Activated naive CD4-positive, alpha-beta T cell treated with anti-CD3 and anti-CD28 coated beads for 36 hours (primary cell): ENCODE measurements at regions of chr19 and their contacts with region 1.

Region 1: DNA sequence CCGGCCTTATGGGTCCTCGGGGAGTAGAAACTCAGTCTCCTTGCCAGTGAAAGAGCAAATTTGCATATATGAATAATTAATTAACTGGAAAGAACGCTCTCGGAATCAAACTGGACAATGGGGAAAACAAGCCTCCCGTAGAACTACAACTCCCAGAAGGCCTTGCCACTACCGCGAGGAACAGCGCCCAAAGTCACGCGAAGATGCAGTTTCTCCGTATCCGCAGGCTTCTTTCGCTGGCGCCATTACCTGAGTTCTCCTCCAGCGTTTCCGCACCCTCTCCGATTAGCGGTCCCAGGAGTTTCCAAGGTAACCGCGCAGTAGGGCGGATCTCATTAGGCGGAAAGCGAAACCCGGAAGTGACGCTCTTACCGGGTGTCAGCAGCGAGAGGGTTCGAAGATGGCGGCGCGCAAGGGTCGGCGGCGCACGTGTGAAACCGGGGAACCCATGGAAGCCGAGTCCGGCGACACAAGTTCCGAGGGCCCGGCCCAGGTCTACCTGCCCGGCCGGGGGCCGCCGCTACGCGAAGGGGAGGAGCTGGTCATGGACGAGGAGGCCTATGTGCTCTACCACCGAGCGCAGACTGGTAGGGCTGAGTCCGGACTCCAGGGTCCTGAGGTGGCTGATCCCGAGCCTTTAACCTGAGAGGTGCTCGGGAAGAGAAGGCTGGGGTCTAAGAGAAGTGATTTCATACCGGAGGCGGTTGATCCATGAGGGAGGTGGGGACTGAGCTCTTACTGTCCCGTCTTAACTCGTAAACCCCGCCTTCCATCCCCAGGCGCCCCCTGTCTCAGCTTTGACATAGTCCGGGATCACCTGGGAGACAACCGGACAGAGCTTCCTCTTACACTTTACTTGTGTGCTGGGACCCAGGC is at the start of gene GRWD1:
- DNase-seq: peak; percentile 97
- H3K4me3 Mint-ChIP-seq: peak within 1 kb of the TSS; percentile 90
- H3K27ac Mint-ChIP-seq: peak within 1 kb of the TSS; percentile 84
- H3K4me1 Mint-ChIP-seq: peaks cover 35% of the 10 kb centered on the region
- H3K27me3 Mint-ChIP-seq: peaks cover 18% of the 10 kb centered on the region
- total RNA-seq, gene GRWD1: 32.4 to 36.0 TPM

Region 2: DNA sequence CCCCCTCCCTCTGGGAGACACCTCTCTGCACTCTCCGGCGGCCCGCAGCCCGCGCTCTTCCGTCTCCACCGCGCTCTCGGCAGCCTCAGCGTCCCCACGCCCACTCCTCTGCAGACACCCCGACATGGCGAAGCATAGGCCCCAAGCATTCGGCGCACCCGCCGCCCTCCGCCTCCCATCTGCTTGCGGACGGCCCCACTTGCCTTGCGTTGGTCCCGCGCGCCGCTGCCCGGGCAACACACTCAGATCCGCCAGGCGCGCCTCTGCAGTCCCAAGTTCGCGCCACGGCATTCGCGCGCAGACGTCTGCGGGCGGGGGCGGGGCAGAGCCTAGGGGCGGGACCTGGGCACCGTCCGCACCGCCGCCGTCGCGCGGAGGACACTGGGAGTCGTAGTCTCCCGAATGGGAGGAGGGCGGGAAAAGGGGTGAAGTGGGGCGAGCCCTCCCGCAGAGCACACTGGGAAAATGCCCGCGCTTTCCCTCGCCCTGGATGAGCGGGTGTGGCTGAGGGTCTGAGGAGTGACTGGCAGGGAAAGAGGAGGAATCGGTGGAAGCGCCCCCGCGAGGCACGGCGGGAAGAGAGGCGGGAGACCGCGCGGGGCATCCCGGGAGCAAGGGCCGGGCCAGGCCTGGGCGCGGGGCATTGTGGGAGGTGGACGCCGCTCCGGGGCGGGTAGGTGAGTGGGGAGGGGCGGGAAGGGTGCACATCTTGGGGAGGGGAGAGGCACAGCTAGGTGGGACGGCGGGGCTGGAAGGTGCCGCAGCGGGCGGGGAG is 275.6 kb before region 1 on chr19 and contains the starts of genes LIG1 and ZSWIM9:
- CTCF ChIA-PET with region 1: no interaction called
- intact Hi-C with region 1: loop called (anchors 1 kb)
- DNase-seq: peak; percentile 93
- H3K4me3 Mint-ChIP-seq: peak within 1 kb of the TSS; percentile 90
- H3K27ac Mint-ChIP-seq: peak within 1 kb of the TSS; percentile 97
- H3K4me1 Mint-ChIP-seq: peaks cover 30% of the 10 kb centered on the region
- H3K27me3 Mint-ChIP-seq: no peaks in the 10 kb centered on the region
- total RNA-seq, gene LIG1: 187 to 195 TPM
- total RNA-seq, gene ZSWIM9: 6.1 to 6.7 TPM

Region 3: DNA sequence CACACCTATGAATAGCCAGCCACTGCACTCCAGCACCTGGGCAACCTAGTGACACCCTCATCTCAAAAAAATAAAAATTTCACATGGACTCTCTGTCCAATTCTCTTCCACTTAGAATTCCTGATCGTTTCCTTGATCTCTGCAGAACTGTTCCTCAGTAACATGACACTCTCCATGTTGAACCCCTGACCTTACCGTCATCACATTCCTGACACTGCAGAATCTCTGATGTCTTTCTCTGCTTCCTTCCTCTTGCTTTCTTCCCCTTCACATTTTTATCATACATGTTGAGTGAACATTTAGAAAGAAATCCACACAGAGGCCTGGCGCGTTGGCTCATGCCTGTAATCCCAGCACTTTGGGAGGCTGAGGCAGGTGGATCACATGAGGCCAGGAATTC is 160.9 kb before region 1 on chr19:
- CTCF ChIA-PET with region 1: no interaction called
- intact Hi-C with region 1: no loop called
- DNase-seq: no peak
- H3K4me3 Mint-ChIP-seq: no peak overlapping the region
- H3K27ac Mint-ChIP-seq: no peak overlapping the region
- H3K4me1 Mint-ChIP-seq: no peaks in the 10 kb centered on the region
- H3K27me3 Mint-ChIP-seq: no peaks in the 10 kb centered on the region

Region 4: GRCh38 chr19:48391107-48391986 is 54.5 kb before region 1 on chr19 and contains the start of gene KDELR1:
- CTCF ChIA-PET with region 1: interaction called, 7 read pairs
- intact Hi-C with region 1: loop called (anchors 1 kb)
- DNase-seq: peak; percentile 73
- H3K4me3 Mint-ChIP-seq: peak within 1 kb of the TSS; percentile 94
- H3K27ac Mint-ChIP-seq: peak within 1 kb of the TSS; percentile 90
- H3K4me1 Mint-ChIP-seq: peaks cover 36% of the 10 kb centered on the region
- H3K27me3 Mint-ChIP-seq: peaks cover 27% of the 10 kb centered on the region
- total RNA-seq, gene KDELR1: 81.5 to 83.8 TPM

Region 5: GRCh38 chr19:48476176-48476575 is 30.3 kb after region 1 on chr19:
- CTCF ChIA-PET with region 1: no interaction called
- intact Hi-C with region 1: no loop called
- DNase-seq: no peak
- H3K4me3 Mint-ChIP-seq: no peak overlapping the region
- H3K27ac Mint-ChIP-seq: no peak overlapping the region
- H3K4me1 Mint-ChIP-seq: peaks cover 9% of the 10 kb centered on the region
- H3K27me3 Mint-ChIP-seq: no peaks in the 10 kb centered on the region

Region 6: GRCh38 chr19:48513289-48514122 is 67.7 kb after region 1 on chr19:
- CTCF ChIA-PET with region 1: no interaction called
- intact Hi-C with region 1: loop called (anchors 1 kb)
- DNase-seq: peak; percentile 83
- H3K4me3 Mint-ChIP-seq: no peak overlapping the region
- H3K27ac Mint-ChIP-seq: peak overlapping the region; percentile 31
- H3K4me1 Mint-ChIP-seq: peaks cover 16% of the 10 kb centered on the region
- H3K27me3 Mint-ChIP-seq: no peaks in the 10 kb centered on the region

Region 7: GRCh38 chr19:48618916-48619691 is 173.3 kb after region 1 on chr19 and contains the starts of genes RPL18 and SPHK2:
- CTCF ChIA-PET with region 1: no interaction called
- intact Hi-C with region 1: loop called (anchors 2 kb)
- DNase-seq: peak; percentile 95
- H3K4me3 Mint-ChIP-seq: peak within 1 kb of the TSS; percentile 99
- H3K27ac Mint-ChIP-seq: peak within 1 kb of the TSS; percentile 99
- H3K4me1 Mint-ChIP-seq: peaks cover 53% of the 10 kb centered on the region
- H3K27me3 Mint-ChIP-seq: no peaks in the 10 kb centered on the region
- total RNA-seq, gene RPL18: 2,373 to 2,473 TPM
- total RNA-seq, gene SPHK2: 20.1 to 20.6 TPM

Region 8: GRCh38 chr19:48770260-48770659 is 324.4 kb after region 1 on chr19:
- CTCF ChIA-PET with region 1: no interaction called
- intact Hi-C with region 1: no loop called
- DNase-seq: no peak
- H3K4me3 Mint-ChIP-seq: no peak overlapping the region
- H3K27ac Mint-ChIP-seq: no peak overlapping the region
- H3K4me1 Mint-ChIP-seq: no peaks in the 10 kb centered on the region
- H3K27me3 Mint-ChIP-seq: peaks cover 6% of the 10 kb centered on the region